Activated CD4-positive, alpha-beta memory T cell treated with anti-CD3 and anti-CD28 coated beads for 36 hours (primary cell): ENCODE measurements at regions of chr1 and their contacts with region 1.

Region 1: DNA sequence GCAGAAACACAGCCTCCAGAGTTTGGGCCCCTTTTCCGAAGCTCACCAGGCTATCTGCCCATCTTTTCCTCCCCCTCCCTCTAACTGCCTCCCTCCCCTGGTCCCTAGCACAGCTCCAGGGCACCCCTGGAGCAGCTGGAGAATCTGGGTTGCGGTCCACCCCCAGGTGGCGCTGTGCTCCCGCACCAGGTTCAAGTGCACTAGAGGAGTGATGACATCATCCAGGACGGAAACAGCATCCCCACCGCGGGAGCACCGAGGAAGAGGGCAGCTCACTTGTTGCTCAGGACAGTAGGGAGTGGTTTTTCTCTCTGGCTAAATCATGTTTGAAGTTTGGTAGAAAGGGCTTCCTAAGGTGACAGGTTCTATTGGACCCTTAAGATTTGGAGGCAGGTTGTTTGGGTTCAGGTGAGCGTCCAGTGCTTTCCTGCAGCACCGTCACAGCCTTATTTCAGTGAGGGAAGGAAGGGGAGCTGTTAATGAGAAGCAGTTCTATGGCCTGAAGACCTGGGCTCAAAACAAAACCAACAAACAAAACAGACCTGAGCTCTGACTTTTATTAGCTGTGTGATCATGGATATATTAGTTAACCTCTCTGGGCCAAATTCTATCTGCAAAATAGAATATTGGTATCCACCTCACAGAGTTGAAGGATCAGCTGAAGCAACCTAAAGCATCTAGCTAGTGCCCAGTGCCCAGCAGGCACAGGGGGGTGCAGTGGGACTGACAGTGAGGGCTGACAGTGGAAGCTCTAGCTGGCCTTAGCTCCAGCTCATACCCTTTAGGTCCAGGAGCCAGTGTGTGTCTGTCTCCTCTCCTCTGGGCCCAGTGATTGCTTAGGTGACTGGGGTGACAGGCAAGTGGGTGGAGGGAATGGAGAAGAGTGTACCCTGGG is 7.5 kb downstream of the SHISA4 start:
- DNase-seq: peak; percentile 92
- H3K4me3 Mint-ChIP-seq: peak overlapping the region; percentile 34
- H3K27ac Mint-ChIP-seq: no peak overlapping the region
- H3K4me1 Mint-ChIP-seq: peaks cover 7% of the 10 kb centered on the region
- H3K27me3 Mint-ChIP-seq: peaks cover 21% of the 10 kb centered on the region

Region 2: DNA sequence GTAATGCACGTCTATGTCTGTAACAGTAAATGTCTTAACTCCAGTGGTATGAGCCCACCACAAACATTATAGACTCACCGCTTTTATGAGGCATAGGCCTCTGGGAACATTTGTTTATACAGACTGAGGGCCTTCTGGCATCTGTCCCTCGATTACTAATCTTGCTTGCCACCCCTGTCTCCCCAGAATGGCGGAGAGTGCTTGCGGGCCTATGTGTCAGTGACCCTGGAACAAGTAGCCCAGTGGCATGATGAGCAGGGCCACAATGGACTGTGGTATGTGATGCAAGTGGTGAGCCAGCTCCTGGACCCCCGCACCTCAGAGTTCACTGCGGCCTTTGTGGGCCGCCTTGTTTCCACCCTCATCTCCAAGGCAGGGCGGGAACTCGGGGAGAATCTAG is 25.8 kb before region 1 on chr1:
- CTCF ChIA-PET with region 1: interaction called, 12 read pairs
- POLR2A ChIA-PET with region 1: no interaction called
- intact Hi-C with region 1: no loop called
- DNase-seq: no peak
- H3K4me3 Mint-ChIP-seq: no peak overlapping the region
- H3K27ac Mint-ChIP-seq: no peak overlapping the region
- H3K4me1 Mint-ChIP-seq: no peaks in the 10 kb centered on the region
- H3K27me3 Mint-ChIP-seq: no peaks in the 10 kb centered on the region

Region 3: GRCh38 chr1:201912832-201913231 is 16.7 kb after region 1 on chr1:
- CTCF ChIA-PET with region 1: interaction called, 19 read pairs
- POLR2A ChIA-PET with region 1: no interaction called
- intact Hi-C with region 1: no loop called
- DNase-seq: no peak
- H3K4me3 Mint-ChIP-seq: no peak overlapping the region
- H3K27ac Mint-ChIP-seq: no peak overlapping the region
- H3K4me1 Mint-ChIP-seq: peaks cover 2% of the 10 kb centered on the region
- H3K27me3 Mint-ChIP-seq: peaks cover 14% of the 10 kb centered on the region

Region 4: GRCh38 chr1:201964261-201964660 is 68.1 kb after region 1 on chr1:
- CTCF ChIA-PET with region 1: interaction called, 25 read pairs
- POLR2A ChIA-PET with region 1: no interaction called
- intact Hi-C with region 1: loop called (anchors 5 kb)
- DNase-seq: no peak
- H3K4me3 Mint-ChIP-seq: no peak overlapping the region
- H3K27ac Mint-ChIP-seq: no peak overlapping the region
- H3K4me1 Mint-ChIP-seq: peaks cover 2% of the 10 kb centered on the region
- H3K27me3 Mint-ChIP-seq: no peaks in the 10 kb centered on the region

Region 5: DNA sequence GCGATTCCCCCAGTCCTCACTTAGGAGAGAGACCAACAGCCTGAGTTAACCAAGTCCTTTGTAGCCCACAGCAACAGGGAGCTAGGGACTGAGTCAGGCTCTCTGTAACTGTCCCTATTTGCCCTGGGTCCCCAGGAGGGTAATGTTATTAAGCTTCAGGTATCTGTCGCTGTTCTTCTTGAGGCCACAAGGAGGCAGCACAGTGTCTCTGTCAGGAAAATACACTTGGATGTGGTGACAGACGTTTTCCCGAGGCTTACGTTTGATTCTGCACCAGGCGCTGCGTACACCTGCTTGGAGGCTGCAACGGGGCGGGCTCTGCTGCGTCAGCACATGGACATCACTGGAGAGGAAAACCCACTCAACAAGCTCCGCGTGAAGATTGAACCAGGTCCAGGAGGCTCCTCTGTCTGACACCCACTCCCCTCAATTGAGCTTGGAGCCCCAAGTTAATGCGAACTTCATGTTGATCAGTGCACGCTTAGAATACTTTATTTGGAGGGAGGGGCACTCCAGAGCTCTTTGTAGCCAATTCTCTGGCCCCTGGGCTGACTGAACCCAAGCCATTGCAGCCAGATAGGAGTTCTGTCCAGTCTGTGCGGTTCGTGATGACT is 103.6 kb after region 1 on chr1:
- CTCF ChIA-PET with region 1: interaction called, 48 read pairs
- POLR2A ChIA-PET with region 1: no interaction called
- intact Hi-C with region 1: no loop called
- DNase-seq: peak; percentile 30
- H3K4me3 Mint-ChIP-seq: no peak overlapping the region
- H3K27ac Mint-ChIP-seq: no peak overlapping the region
- H3K4me1 Mint-ChIP-seq: no peaks in the 10 kb centered on the region
- H3K27me3 Mint-ChIP-seq: no peaks in the 10 kb centered on the region

Region 6: GRCh38 chr1:202184750-202185460 is 288.7 kb after region 1 on chr1:
- CTCF ChIA-PET with region 1: no interaction called
- POLR2A ChIA-PET with region 1: no interaction called
- intact Hi-C with region 1: no loop called
- DNase-seq: peak; percentile 84
- H3K4me3 Mint-ChIP-seq: no peak overlapping the region
- H3K27ac Mint-ChIP-seq: no peak overlapping the region
- H3K4me1 Mint-ChIP-seq: peaks cover 8% of the 10 kb centered on the region
- H3K27me3 Mint-ChIP-seq: no peaks in the 10 kb centered on the region

Region 7: DNA sequence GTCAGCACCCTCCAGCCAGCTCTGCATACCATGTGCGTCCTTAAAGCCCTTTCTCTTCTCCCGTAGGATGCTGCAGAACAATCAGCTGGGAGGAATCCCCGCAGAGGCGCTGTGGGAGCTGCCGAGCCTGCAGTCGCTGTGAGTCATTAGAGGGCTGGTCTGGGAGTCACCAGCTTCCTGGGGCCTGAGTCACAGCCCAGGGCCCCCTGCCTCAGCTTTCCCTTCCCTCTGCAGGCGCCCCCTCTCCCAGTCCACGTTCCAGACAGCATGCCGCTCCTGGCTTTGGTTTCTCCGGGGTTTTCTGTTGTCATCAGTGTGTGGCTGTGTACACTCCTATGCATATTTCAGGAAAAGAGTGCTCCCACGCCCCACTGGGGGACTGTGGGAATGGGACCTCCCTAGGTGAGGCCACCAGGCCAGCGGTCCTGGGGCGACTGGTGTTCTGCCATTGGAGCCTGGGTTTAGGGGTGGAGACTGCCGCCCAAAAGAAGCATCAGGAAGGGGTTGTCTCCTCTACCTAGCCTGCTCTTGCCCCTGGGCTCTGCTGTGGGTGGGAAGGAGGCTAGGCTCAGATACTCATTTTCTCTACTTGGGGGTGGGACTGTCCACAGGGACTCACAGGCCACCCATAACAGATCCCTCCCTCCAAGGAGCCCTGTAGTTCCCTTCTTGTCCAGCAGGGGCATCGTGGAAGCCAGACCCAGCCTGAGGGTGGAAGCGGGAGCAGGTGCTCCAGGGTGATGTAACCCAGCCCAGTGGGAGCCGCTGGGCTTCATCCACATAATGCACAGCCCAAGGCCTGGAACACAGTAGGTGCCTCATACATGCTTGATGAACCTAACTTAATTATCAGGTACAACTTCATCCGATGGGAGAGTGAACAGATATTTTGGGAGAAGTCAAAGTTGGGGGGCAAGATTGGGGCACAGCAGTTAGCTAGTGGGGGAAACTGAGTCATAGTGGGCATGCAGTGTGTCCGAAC is 340.0 kb after region 1 on chr1:
- CTCF ChIA-PET with region 1: no interaction called
- POLR2A ChIA-PET with region 1: no interaction called
- intact Hi-C with region 1: no loop called
- DNase-seq: peak; percentile 81
- H3K4me3 Mint-ChIP-seq: no peak overlapping the region
- H3K27ac Mint-ChIP-seq: no peak overlapping the region
- H3K4me1 Mint-ChIP-seq: peaks cover 7% of the 10 kb centered on the region
- H3K27me3 Mint-ChIP-seq: peaks cover 15% of the 10 kb centered on the region